Activated CD8-positive, alpha-beta T cell treated with anti-CD3 and anti-CD28 coated beads for 36 hours (primary cell): ENCODE measurements at regions of chr6 and their contacts with region 1.

Region 1: GRCh38 chr6:18264219-18264922 is at the start of gene DEK:
- DNase-seq: peak; percentile 89
- ATAC-seq: peak; percentile 67
- H3K4me3 Mint-ChIP-seq: peak within 1 kb of the TSS; percentile 90
- H3K27ac Mint-ChIP-seq: peak within 1 kb of the TSS; percentile 96
- H3K4me1 Mint-ChIP-seq: peaks cover 40% of the 10 kb centered on the region
- H3K27me3 Mint-ChIP-seq: no peaks in the 10 kb centered on the region
- CTCF ChIP-seq: no peak
- total RNA-seq, gene DEK: 185 to 191 TPM

Region 2: GRCh38 chr6:18155150-18155863 is 109.1 kb before region 1 on chr6 and contains the start of gene KDM1B:
- CTCF ChIA-PET with region 1: no interaction called
- POLR2A ChIA-PET with region 1: no interaction called
- intact Hi-C with region 1: loop called (anchors 5 kb)
- DNase-seq: peak; percentile 98
- ATAC-seq: peak; percentile 97
- H3K4me3 Mint-ChIP-seq: peak within 1 kb of the TSS; percentile 96
- H3K27ac Mint-ChIP-seq: peak within 1 kb of the TSS; percentile 93
- H3K4me1 Mint-ChIP-seq: peaks cover 27% of the 10 kb centered on the region
- H3K27me3 Mint-ChIP-seq: no peaks in the 10 kb centered on the region
- CTCF ChIP-seq: no peak
- total RNA-seq, gene KDM1B: 10.9 to 12.2 TPM

Region 3: DNA sequence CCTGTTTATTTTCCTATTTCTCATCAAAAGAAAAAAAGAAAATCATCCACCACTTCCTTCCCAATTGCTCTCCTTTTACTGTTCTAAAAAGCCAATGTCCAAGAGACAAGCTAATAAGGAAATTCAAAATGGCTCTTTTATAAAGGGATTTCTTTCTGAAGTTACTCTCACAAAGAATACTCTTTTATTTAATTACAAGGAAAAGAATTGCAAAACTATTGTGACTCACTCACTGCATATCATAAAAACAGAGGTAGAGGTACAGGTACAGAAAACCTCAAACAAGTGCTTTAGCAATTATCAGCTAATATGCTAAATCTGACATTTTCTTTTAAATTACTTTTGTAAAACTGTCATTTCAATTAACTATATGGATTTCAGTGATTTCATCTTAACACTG is 18.2 kb before region 1 on chr6:
- CTCF ChIA-PET with region 1: interaction called, 4 read pairs
- POLR2A ChIA-PET with region 1: interaction called, 10 read pairs
- intact Hi-C with region 1: no loop called
- DNase-seq: no peak
- ATAC-seq: no peak
- H3K4me3 Mint-ChIP-seq: no peak overlapping the region
- H3K27ac Mint-ChIP-seq: peak overlapping the region; percentile 53
- H3K4me1 Mint-ChIP-seq: peaks cover 56% of the 10 kb centered on the region
- H3K27me3 Mint-ChIP-seq: no peaks in the 10 kb centered on the region
- CTCF ChIP-seq: no peak